Transverse colon (tissue), 4 donors: ENCODE measurements at regions of chr4 and their contacts with region 1.

Region 1: DNA sequence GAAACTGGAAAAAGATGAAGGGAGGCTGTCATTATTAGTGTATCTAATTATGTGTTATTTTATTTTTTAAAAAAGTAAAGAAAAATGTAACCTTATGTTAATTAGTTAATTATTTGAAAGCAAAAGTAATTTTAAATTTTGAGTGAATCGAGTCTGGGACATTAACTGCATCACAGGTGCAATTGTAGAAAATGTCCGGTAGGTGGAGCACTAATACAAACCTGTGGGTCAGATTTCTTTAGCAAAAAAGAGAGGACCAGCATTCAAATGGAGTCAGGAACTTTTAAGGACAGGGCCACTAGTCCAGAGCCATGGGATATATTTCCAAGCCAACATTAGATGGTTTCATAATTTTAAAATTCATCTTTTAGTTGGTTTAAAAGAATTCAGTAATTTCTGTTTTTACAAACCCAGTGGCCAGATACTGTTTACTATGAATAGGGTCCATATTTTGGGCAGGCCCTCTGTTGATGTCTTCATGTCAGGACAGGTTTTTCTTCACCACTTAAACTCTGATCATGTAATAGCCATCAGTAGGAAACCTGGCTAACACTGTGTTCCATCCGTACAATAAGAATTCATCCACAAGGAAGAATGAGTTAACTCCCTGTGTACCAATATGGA is 27.2 kb downstream of the BST1 start:
- DNase-seq: no peak
- H3K4me3 ChIP-seq: no peak overlapping the region
- H3K27ac ChIP-seq: no peak overlapping the region
- H3K4me1 ChIP-seq: peaks cover 0 to 6% (median 1%) of the 10 kb centered on the region in 4 donors
- H3K27me3 ChIP-seq: no peaks in the 10 kb centered on the region
- CTCF ChIP-seq: peak; percentile 77 to 91 (median 88)
- EP300 ChIP-seq: no peak
- POLR2A ChIP-seq: no peak

Region 2: DNA sequence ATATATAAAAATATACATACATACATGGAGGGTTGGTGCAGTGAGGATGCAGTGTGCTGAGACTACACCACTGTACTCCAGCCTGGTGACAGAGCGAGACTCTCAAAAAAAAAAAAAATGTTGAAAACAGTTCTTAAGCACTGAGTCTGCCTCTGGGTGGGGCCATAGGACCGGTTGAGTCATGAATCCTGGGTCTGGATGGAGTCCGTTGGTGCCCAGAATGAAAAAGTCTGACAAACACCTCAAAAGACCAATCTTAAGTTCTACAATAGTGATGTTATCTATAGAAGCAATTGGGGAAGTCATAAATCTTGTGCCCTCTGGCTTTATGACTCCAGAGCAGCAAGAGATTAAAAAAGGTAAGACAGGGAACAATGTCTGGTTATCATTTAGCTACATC is 138.1 kb after region 1 on chr4:
- in situ Hi-C with region 1: loop called in 1 of 4 experiments (anchors 25 kb)
- intact Hi-C with region 1: no loop called
- DNase-seq: no peak
- H3K4me3 ChIP-seq: no peak overlapping the region
- H3K27ac ChIP-seq: no peak overlapping the region
- H3K4me1 ChIP-seq: no peaks in the 10 kb centered on the region
- H3K27me3 ChIP-seq: no peaks in the 10 kb centered on the region
- CTCF ChIP-seq: no peak
- EP300 ChIP-seq: no peak
- POLR2A ChIP-seq: no peak

Region 3: DNA sequence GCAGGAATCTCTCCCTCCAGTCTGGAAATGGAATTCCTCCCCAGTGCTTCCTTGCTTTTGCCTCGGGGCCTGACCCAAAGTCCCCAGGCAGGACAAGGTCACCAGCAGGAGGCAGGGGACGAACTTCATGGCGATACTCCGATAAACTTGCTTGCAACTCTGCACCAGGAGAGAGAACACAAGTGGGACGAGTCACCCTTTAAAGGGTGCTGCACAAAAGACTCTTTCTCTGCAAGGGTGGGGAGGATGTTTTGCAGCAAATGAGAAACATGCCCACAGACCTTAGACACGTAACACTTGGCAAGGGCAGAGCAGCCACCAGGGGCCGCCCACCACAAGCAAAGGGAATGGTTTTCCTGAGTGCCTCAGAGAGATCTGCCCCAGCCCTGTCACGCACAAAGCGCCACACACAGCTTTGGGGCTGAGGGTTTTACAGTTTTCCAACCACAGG is 233.0 kb after region 1 on chr4 and contains the start of gene FGFBP2:
- in situ Hi-C with region 1: loop called in 1 of 4 experiments (anchors 10 kb)
- intact Hi-C with region 1: no loop called
- DNase-seq: peak; percentile 59
- H3K4me3 ChIP-seq: no peak within 1 kb of the TSS
- H3K27ac ChIP-seq: no peak within 1 kb of the TSS
- H3K4me1 ChIP-seq: peaks cover 0 to 15% (median 7%) of the 10 kb centered on the region in 4 donors
- H3K27me3 ChIP-seq: no peaks in the 10 kb centered on the region
- CTCF ChIP-seq: peak; percentile 36 to 57 (median 43)
- EP300 ChIP-seq: no peak
- POLR2A ChIP-seq: no peak
- total RNA-seq, gene FGFBP2: 2.2 to 5.6 TPM in 2 of 4 donors, not detected in the others